ENCODE measurements at regions of chr1 and their contacts with region 1.

Region 1: DNA sequence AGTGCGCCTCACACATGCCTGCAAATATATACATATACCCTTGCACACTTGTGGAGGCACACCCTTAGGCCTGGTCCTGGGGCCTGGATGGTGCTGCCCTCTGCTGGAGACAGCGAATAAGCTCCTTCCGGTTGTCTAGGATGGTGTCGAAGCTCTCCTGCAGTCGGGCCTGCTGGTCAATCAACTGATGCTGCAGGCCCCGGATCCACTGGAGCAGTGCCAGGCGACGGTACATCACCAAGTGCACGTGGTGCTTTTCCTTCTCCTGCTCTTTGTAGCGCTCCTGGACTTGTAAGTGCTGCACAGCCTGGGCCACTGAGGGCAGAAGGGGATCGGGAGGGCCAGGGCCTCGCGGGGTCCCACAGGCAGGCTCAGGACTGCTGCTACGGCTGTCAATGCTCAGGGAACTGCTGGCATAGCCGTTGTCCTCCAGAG is 3.1 kb downstream of the C1orf216 start:
- DNase-seq: no peak
- H3K4me3 ChIP-seq: peak overlapping the region; percentile 6; the same call in 1 of the 2 replicates
- CTCF ChIP-seq: peak; percentile 86

Region 2: GRCh38 chr1:35451125-35451528 is 264.5 kb before region 1 on chr1:
- CTCF ChIA-PET with region 1: interaction called, 55 read pairs
- POLR2A ChIA-PET with region 1: no interaction called
- DNase-seq: no peak
- H3K4me3 ChIP-seq: no peak overlapping the region
- CTCF ChIP-seq: peak; percentile 88

Region 3: GRCh38 chr1:35577071-35577998 is 138.2 kb before region 1 on chr1:
- CTCF ChIA-PET with region 1: interaction called, 657 read pairs
- POLR2A ChIA-PET with region 1: interaction called, 3 read pairs
- DNase-seq: no peak
- H3K4me3 ChIP-seq: no peak overlapping the region
- CTCF ChIP-seq: no peak

Region 4: DNA sequence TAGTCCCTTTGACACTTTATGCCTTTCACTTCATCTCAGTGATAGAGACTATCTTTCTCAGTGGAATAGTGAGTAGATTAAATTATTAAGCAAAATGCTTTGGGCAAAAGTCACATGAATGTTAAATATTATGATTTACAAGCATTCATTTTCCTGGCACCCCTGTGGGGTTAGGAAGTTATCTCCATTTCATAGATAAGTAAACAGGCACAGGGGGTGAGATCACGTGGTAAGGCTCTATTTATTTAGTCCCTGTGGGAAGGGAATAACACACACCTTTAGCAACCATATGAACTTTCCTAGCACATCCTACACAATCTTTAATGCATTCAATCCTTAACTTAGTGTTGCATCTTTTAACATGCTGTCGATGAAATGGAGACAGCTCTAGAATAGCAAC is 86.5 kb before region 1 on chr1:
- CTCF ChIA-PET with region 1: interaction called, 17 read pairs
- POLR2A ChIA-PET with region 1: no interaction called
- DNase-seq: no peak
- H3K4me3 ChIP-seq: no peak overlapping the region
- CTCF ChIP-seq: no peak

Region 5: GRCh38 chr1:35656148-35656862 is 59.3 kb before region 1 on chr1:
- CTCF ChIA-PET with region 1: interaction called, 22 read pairs
- POLR2A ChIA-PET with region 1: no interaction called
- DNase-seq: no peak
- H3K4me3 ChIP-seq: no peak overlapping the region
- CTCF ChIP-seq: no peak

Region 6: GRCh38 chr1:35702508-35702907 is 13.1 kb before region 1 on chr1:
- CTCF ChIA-PET with region 1: interaction called, 99 read pairs
- POLR2A ChIA-PET with region 1: interaction called, 5 read pairs
- DNase-seq: no peak
- H3K4me3 ChIP-seq: no peak overlapping the region
- CTCF ChIP-seq: no peak

Region 7: DNA sequence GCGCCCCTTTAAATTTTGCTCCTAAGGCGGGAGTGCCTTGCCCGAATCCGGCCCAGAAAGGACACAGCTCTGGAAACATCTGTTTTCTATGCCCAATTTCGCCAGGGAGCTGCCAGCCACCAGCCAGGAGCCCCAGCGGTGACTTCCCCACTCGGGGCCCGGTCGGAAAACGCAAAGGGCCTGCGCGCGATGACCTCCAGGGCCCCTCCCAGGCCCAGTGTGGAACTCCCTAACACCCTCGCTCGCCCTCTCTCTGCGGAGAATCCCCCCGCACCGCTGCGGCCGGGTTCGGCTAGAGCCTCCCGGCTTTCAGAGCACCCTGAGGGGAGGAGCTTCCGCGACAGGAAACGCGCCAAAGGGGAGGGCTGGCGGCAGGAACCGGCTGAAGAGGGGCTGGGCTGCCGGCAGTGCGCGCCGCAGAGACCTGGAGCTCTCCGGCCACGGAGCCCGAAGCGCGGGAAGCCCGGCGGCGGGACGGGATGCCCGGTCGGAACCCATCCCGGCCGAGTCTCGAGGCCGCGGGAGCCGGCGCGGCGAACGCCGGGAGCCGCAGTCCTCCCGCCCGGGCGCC is 53.7 kb after region 1 on chr1:
- CTCF ChIA-PET with region 1: interaction called, 10 read pairs
- POLR2A ChIA-PET with region 1: interaction called, 3 read pairs
- DNase-seq: no peak
- H3K4me3 ChIP-seq: peak overlapping the region; percentile 81
- CTCF ChIP-seq: no peak

Region 8: DNA sequence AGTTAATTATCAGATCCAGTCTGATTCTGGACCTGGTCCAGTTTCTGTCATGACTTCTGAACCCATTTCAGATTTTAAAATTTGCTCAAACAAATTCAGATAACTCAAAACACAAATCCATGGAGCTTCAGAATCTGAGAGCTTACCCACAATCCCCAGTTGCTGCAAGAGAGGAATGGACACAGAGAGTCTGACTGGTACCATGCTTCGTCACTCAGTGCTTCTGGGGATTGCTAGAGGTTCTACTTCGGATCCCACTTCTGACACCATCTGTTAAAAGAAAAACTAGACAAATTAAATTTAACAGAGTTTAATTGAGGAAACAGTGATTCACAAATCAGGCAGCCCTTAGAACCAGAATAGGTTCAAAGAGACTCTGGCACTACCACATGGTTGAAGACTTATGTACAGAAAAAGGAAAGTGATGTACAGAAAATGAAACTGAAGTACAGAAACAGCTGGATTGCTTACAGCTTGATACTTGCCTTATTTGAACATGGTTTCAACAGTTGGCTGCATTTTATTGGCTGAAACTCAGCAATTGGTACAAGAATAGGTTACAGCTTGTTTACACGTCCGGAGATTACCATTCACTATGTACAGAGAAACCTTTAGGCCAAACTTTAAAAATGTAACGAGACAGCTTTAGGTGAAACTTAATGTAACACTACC is 307.6 kb after region 1 on chr1:
- CTCF ChIA-PET with region 1: no interaction called
- POLR2A ChIA-PET with region 1: no interaction called
- DNase-seq: no peak
- H3K4me3 ChIP-seq: no peak overlapping the region
- CTCF ChIP-seq: no peak